Activated B cell treated with CpG ODN at 0.5 μM for 24 hours (primary cell): ENCODE measurements at regions of chr21 and their contacts with region 1.

Region 1: GRCh38 chr21:42892931-42893755 is at the start of gene NDUFV3:
- DNase-seq: peak; percentile 96
- ATAC-seq: peak; percentile 96
- H3K4me3 Mint-ChIP-seq: peak within 1 kb of the TSS; percentile 87
- H3K27ac Mint-ChIP-seq: peak within 1 kb of the TSS; percentile 90
- H3K4me1 Mint-ChIP-seq: peaks cover 13% of the 10 kb centered on the region
- H3K27me3 Mint-ChIP-seq: no peaks in the 10 kb centered on the region
- CTCF ChIP-seq: no peak
- total RNA-seq, gene NDUFV3: 21.2 and 27.1 TPM in 2 replicates

Region 2: GRCh38 chr21:42414928-42415769 is 478.0 kb before region 1 on chr21:
- CTCF ChIA-PET with region 1: no interaction called
- POLR2A ChIA-PET with region 1: no interaction called
- intact Hi-C with region 1: no loop called
- DNase-seq: peak; percentile 62
- ATAC-seq: peak; percentile 86
- H3K4me3 Mint-ChIP-seq: peak overlapping the region; percentile 70
- H3K27ac Mint-ChIP-seq: peak overlapping the region; percentile 84
- H3K4me1 Mint-ChIP-seq: peaks cover 38% of the 10 kb centered on the region
- H3K27me3 Mint-ChIP-seq: peaks cover 4% of the 10 kb centered on the region
- CTCF ChIP-seq: no peak

Region 3: GRCh38 chr21:42799948-42800347 is 93.2 kb before region 1 on chr21:
- CTCF ChIA-PET with region 1: no interaction called
- POLR2A ChIA-PET with region 1: interaction called, 15 read pairs
- intact Hi-C with region 1: no loop called
- DNase-seq: peak; percentile 44
- ATAC-seq: peak; percentile 97
- H3K4me3 Mint-ChIP-seq: peak overlapping the region; percentile 13
- H3K27ac Mint-ChIP-seq: peak overlapping the region; percentile 75
- H3K4me1 Mint-ChIP-seq: peaks cover 23% of the 10 kb centered on the region
- H3K27me3 Mint-ChIP-seq: peaks cover 3% of the 10 kb centered on the region
- CTCF ChIP-seq: no peak

Region 4: GRCh38 chr21:42850866-42851391 is 42.2 kb before region 1 on chr21:
- CTCF ChIA-PET with region 1: no interaction called
- POLR2A ChIA-PET with region 1: no interaction called
- intact Hi-C with region 1: loop called (anchors 2 kb)
- DNase-seq: peak; percentile 26
- ATAC-seq: peak; percentile 45
- H3K4me3 Mint-ChIP-seq: no peak overlapping the region
- H3K27ac Mint-ChIP-seq: no peak overlapping the region
- H3K4me1 Mint-ChIP-seq: no peaks in the 10 kb centered on the region
- H3K27me3 Mint-ChIP-seq: no peaks in the 10 kb centered on the region
- CTCF ChIP-seq: no peak

Region 5: GRCh38 chr21:42878993-42879787 is 14.0 kb before region 1 on chr21 and contains the start of gene WDR4:
- CTCF ChIA-PET with region 1: no interaction called
- POLR2A ChIA-PET with region 1: interaction called, 39 read pairs
- intact Hi-C with region 1: loop called (anchors 1 kb)
- DNase-seq: peak; percentile 99
- ATAC-seq: peak; percentile 88
- H3K4me3 Mint-ChIP-seq: peak within 1 kb of the TSS; percentile 91
- H3K27ac Mint-ChIP-seq: peak within 1 kb of the TSS; percentile 95
- H3K4me1 Mint-ChIP-seq: peaks cover 23% of the 10 kb centered on the region
- H3K27me3 Mint-ChIP-seq: no peaks in the 10 kb centered on the region
- CTCF ChIP-seq: no peak
- total RNA-seq, gene WDR4: 56.7 and 60.5 TPM in 2 replicates

Region 6: GRCh38 chr21:42913476-42913875 is 20.3 kb after region 1 on chr21:
- CTCF ChIA-PET with region 1: no interaction called
- POLR2A ChIA-PET with region 1: no interaction called
- intact Hi-C with region 1: no loop called
- DNase-seq: no peak
- ATAC-seq: no peak
- H3K4me3 Mint-ChIP-seq: no peak overlapping the region
- H3K27ac Mint-ChIP-seq: no peak overlapping the region
- H3K4me1 Mint-ChIP-seq: no peaks in the 10 kb centered on the region
- H3K27me3 Mint-ChIP-seq: no peaks in the 10 kb centered on the region
- CTCF ChIP-seq: no peak